AG04450 (cell line): ENCODE measurements at regions of chr4 and their contacts with region 1.

Region 1: DNA sequence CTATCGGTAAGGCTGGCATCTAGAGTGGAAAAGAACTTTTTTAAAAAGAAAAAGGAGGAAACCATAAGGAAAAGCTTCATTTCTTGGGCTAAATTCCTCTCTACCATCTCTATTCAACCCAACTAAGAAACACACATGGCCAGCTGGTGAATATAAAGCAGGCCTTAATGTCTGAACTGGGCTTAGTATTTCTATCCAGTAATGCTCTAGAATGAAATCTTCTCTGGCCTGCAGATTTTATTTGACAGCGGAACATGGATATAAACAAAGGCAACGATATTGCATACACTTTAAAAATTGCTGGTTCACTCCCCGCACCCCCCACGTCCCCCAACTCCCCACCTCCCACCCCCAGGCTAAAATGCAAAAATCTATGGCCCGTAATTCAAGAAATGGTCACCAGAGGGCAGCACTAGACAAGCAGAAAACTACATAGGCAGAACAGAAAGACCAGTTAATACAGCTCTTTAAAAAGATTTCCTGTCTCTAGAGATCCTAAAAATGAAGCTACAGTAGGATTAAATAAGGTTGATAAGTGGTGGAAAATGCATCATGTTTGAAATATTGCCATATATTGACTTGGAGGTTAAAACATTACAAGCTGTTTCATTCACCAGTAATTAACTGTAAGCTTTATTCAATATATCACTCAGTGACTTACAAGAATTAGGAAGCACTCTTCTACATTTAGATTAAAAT is 155.2 kb upstream of the GALNT7 start:
- DNase-seq: no peak
- H3K4me3 ChIP-seq: no peak overlapping the region
- H3K27ac ChIP-seq: no peak overlapping the region
- H3K27me3 ChIP-seq: no peaks in the 10 kb centered on the region
- CTCF ChIP-seq: peak; percentile 67

Region 2: GRCh38 chr4:172989984-172990820 is 23.2 kb before region 1 on chr4:
- CTCF ChIA-PET with region 1: interaction called, 14 read pairs
- POLR2A ChIA-PET with region 1: no interaction called
- DNase-seq: no peak
- H3K4me3 ChIP-seq: no peak overlapping the region
- H3K27ac ChIP-seq: no peak overlapping the region
- H3K27me3 ChIP-seq: no peaks in the 10 kb centered on the region
- CTCF ChIP-seq: no peak

Region 3: DNA sequence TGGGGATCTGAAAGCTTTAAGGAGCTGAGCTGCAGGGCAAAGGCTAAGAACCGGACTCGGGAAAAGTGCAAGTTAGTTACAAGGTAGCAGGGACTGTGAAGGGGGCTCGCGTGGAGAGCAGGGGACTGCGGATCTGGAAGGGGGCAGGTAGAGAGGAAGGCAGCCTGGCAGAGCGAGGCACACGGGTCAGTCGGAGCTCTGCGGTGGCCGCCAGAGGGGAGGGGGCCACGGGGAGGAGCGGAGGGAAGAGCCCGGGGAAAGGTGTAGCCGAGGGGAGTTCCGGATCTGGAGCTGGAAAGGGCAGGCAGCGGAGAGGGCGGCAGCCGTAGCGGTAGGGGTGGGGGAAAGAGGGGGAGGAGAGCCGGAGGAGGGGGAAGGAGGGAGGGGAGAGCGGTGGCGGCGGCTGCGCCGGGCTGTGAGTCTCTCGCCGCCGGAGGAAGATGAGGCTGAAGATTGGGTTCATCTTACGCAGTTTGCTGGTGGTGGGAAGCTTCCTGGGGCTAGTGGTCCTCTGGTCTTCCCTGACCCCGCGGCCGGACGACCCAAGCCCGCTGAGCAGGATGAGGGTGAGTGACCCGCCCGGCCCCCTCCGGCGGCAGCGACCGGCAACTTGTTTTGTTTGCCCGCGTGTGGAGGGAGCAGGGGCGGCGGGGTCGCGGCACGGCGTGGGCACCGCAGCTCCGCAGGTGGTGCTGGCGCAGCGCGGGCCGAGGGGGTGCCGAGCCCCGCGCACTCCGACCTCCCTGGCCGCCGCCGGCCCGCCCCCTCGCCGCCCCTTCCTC is 155.2 kb after region 1 on chr4 and contains the start of gene GALNT7:
- CTCF ChIA-PET with region 1: interaction called, 24 read pairs
- POLR2A ChIA-PET with region 1: interaction called, 3 read pairs
- DNase-seq: no peak
- H3K4me3 ChIP-seq: peak within 1 kb of the TSS; percentile 87
- H3K27ac ChIP-seq: peak within 1 kb of the TSS; percentile 68
- H3K27me3 ChIP-seq: no peaks in the 10 kb centered on the region
- CTCF ChIP-seq: no peak
- polyA plus RNA-seq, gene GALNT7: 30.9 and 47.6 TPM in 2 replicates

Region 4: DNA sequence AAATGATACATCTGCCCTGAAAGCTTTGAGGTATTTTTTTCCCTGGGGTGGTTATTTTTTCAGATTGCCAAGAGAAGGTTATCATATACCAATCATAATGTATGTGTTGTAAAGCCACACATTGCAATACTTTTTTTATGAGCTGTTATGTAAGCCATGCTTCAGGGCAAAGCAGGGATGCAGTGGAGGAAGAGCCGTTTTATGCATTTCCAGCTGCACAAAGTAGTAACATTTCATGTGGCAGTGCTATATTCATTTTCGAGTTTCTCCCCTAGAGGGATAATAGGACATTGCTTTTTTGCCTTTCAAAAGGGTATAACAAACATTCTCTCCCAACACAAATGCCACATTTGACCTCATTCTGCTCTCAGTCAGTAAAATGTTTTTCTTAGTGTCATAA is 223.8 kb after region 1 on chr4:
- CTCF ChIA-PET with region 1: interaction called, 13 read pairs
- POLR2A ChIA-PET with region 1: no interaction called
- DNase-seq: no peak
- H3K4me3 ChIP-seq: no peak overlapping the region
- H3K27ac ChIP-seq: no peak overlapping the region
- H3K27me3 ChIP-seq: no peaks in the 10 kb centered on the region
- CTCF ChIP-seq: peak; percentile 28; the same call in 1 of the 2 replicates

Region 5: GRCh38 chr4:173270312-173271027 is 257.1 kb after region 1 on chr4:
- CTCF ChIA-PET with region 1: interaction called, 110 read pairs
- POLR2A ChIA-PET with region 1: no interaction called
- DNase-seq: no peak
- H3K4me3 ChIP-seq: no peak overlapping the region
- H3K27ac ChIP-seq: no peak overlapping the region
- H3K27me3 ChIP-seq: no peaks in the 10 kb centered on the region
- CTCF ChIP-seq: no peak

Region 6: GRCh38 chr4:173307778-173308177 is 294.4 kb after region 1 on chr4:
- CTCF ChIA-PET with region 1: interaction called, 14 read pairs
- POLR2A ChIA-PET with region 1: no interaction called
- DNase-seq: no peak
- H3K4me3 ChIP-seq: no peak overlapping the region
- H3K27ac ChIP-seq: no peak overlapping the region
- H3K27me3 ChIP-seq: no peaks in the 10 kb centered on the region
- CTCF ChIP-seq: no peak